ENCODE measurements at regions of chr12 and their contacts with region 1.

Region 1: DNA sequence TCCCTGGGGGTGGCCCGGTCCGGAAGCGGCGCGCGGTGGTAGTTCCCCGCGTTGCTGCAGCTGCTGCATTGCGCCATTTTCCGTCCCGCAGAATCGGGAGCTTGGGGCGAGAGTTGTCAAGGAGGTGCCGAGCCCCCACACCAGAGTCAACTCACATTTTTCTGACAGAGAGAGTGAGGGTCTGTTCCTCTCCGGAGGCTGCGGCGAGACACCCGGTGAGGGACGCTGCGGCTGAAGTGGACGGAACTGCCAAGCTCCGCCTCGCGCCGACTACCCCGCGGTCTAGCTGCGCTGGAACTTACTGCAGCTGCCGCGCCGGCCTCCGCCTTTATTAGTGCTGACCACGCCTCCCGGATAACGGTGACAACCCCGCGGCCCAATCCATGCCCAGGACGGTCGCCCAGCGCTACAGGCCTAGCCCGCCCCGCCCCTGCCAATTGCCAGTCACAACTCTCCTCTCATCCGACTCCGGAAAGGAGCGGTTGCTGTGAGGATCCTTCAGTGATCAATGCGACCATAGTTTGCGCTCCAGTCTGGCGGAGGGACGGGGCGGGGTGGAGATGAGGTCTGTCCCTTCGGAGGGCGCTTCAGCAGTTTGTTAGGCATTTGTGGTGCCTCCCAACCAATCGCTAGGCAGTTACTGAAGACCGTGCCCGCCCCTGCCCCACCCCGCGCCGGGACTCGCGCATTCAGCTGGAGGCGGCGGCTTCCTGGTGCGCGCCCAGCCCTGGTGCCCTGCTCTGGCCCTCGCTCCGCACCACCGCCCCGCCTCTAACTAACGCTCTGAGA is at the start of gene VAMP1:
- DNase-seq: peak; percentile 90 to 97 (median 95)
- ATAC-seq: peak; percentile 94
- H3K4me3 ChIP-seq: peak within 1 kb of the TSS; percentile 96
- H3K4me3 Mint-ChIP-seq: peak within 1 kb of the TSS; percentile 85 to 96 (median 92)
- H3K27ac ChIP-seq: peak within 1 kb of the TSS; percentile 75
- H3K27ac Mint-ChIP-seq: peak within 1 kb of the TSS; percentile 79 to 99 (median 95)
- H3K4me1 ChIP-seq: peaks cover 38 to 39% of the 10 kb centered on the region in 2 donors
- H3K4me1 Mint-ChIP-seq: peaks cover 26 to 59% (median 52%) of the 10 kb centered on the region in 7 donors
- H3K27me3 ChIP-seq: no peaks in the 10 kb centered on the region
- H3K27me3 Mint-ChIP-seq: peaks cover 0 to 5% (median 0%) of the 10 kb centered on the region in 5 donors
- total RNA-seq, gene VAMP1: 38.7 to 123 (median 47.9) TPM

Region 2: DNA sequence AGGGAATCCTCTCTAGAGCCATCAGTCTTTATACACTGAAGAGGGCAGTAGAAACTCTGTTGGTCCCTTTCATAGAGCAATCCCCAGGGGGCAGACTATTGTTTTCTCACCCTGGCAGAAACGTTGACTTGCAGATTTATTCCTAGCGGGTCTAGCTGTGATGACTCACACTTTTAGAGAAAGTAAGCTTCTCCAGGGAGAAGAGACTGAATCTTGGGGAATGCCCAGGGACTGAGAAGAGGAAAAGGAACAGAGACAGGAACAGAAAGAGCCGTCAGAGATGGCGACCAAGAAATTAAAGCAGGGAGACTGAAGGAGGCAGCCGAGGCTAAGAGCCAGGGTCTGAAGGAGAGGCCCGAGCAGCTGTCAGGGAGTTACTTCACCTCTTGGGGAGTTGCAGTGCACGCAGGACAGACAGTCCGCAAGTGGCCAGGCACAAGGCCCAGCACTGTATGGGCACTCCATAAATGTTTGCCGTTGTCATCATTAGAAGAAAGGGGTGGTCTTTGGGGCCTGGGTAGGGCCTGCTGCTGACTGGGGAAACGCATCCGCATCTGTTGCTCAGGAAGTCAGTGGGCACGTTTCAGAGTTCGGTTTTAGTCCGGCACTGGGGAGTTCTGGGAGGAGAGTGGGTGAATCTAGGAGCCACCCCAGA is 147.1 kb before region 1 on chr12:
- CTCF ChIA-PET with region 1: interaction called, 10 read pairs
- POLR2A ChIA-PET with region 1: interaction called, 4 read pairs
- intact Hi-C with region 1: loop called in 1 of 2 experiments (anchors 1 kb)
- DNase-seq: peak in 5 of 9 donors; percentile 49 to 59 (median 52)
- ATAC-seq: peak; percentile 90
- H3K4me3 ChIP-seq: peak overlapping the region; percentile 45
- H3K4me3 Mint-ChIP-seq: peak overlapping the region; percentile 63 to 90 (median 82)
- H3K27ac ChIP-seq: peak overlapping the region; percentile 35
- H3K27ac Mint-ChIP-seq: peak overlapping the region; percentile 68 to 95 (median 89)
- H3K4me1 ChIP-seq: peaks cover 27 to 38% of the 10 kb centered on the region in 2 donors
- H3K4me1 Mint-ChIP-seq: peaks cover 37 to 74% (median 53%) of the 10 kb centered on the region in 7 donors
- H3K27me3 ChIP-seq: no peaks in the 10 kb centered on the region
- H3K27me3 Mint-ChIP-seq: peaks cover 0 to 6% (median 0%) of the 10 kb centered on the region in 5 donors

Region 3: GRCh38 chr12:6443361-6443983 is 27.1 kb before region 1 on chr12:
- CTCF ChIA-PET with region 1: interaction called, 21 read pairs
- POLR2A ChIA-PET with region 1: interaction called, 726 read pairs
- intact Hi-C with region 1: no loop called
- DNase-seq: no peak
- ATAC-seq: no peak
- H3K4me3 ChIP-seq: peak overlapping the region; percentile 19
- H3K4me3 Mint-ChIP-seq: peak overlapping the region; percentile 95 to 100 (median 100)
- H3K27ac ChIP-seq: peak overlapping the region; percentile 87
- H3K27ac Mint-ChIP-seq: peak overlapping the region; percentile 92 to 100 (median 95)
- H3K4me1 ChIP-seq: peaks cover 25 to 32% of the 10 kb centered on the region in 2 donors
- H3K4me1 Mint-ChIP-seq: peaks cover 22 to 63% (median 53%) of the 10 kb centered on the region in 7 donors
- H3K27me3 ChIP-seq: no peaks in the 10 kb centered on the region
- H3K27me3 Mint-ChIP-seq: no peaks in the 10 kb centered on the region

Region 4: DNA sequence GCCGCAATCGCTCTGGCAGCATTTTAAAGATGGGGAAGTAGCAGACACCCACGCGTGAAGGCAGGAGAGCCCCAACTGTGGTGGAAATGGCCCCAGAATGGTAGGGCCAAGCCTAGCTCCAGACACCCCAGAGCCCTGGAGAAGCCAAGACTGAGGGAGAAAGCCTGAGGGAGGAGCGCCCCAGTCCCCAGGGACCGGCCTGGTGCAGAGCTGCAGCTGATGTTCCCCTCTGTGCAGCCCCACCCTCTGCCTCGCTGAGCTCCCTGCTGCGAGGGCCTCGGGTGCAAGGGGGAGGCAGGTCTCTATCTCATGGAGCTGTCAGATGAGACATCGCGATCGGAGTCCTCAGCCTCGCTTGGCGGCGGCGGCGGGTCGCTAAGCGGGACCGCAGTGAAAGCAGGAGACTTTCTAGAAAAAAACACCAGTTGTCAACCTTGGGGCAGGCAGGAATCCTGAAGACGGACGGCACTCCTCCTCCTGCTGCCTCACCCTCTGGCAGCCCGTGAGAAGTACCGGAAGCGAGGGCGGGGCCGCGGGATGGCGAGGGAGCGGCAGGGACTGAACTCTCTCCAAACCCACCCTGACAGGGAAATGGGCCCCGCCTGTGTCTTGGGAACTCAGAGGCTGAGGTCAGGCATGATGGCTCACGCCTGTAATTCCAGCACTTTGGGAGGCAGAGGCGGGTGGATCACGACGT is 69.8 kb after region 1 on chr12:
- CTCF ChIA-PET with region 1: interaction called, 12 read pairs
- POLR2A ChIA-PET with region 1: interaction called, 87 read pairs
- intact Hi-C with region 1: no loop called
- DNase-seq: peak in 6 of 9 donors; percentile 29 to 69 (median 36)
- ATAC-seq: peak; percentile 23
- H3K4me3 ChIP-seq: peak overlapping the region; percentile 27
- H3K4me3 Mint-ChIP-seq: peak overlapping the region; percentile 66 to 85 (median 80)
- H3K27ac ChIP-seq: peak overlapping the region; percentile 54
- H3K27ac Mint-ChIP-seq: peak overlapping the region; percentile 57 to 92 (median 83)
- H3K4me1 ChIP-seq: peaks cover 23 to 34% of the 10 kb centered on the region in 2 donors
- H3K4me1 Mint-ChIP-seq: peaks cover 32 to 61% (median 56%) of the 10 kb centered on the region in 7 donors
- H3K27me3 ChIP-seq: no peaks in the 10 kb centered on the region
- H3K27me3 Mint-ChIP-seq: no peaks in the 10 kb centered on the region

Region 5: GRCh38 chr12:6607751-6608591 is 137.4 kb after region 1 on chr12:
- CTCF ChIA-PET with region 1: no interaction called
- POLR2A ChIA-PET with region 1: interaction called, 4 read pairs
- intact Hi-C with region 1: loop called in 1 of 2 experiments (anchors 1 kb)
- DNase-seq: peak in 8 of 9 donors; percentile 56 to 81 (median 71)
- ATAC-seq: peak; percentile 49
- H3K4me3 ChIP-seq: no peak overlapping the region
- H3K4me3 Mint-ChIP-seq: no peak overlapping the region
- H3K27ac ChIP-seq: peak overlapping the region; percentile 96
- H3K27ac Mint-ChIP-seq: no peak overlapping the region
- H3K4me1 ChIP-seq: peaks cover 46 to 47% of the 10 kb centered on the region in 2 donors
- H3K4me1 Mint-ChIP-seq: peaks cover 48 to 55% (median 51%) of the 10 kb centered on the region in 7 donors
- H3K27me3 ChIP-seq: no peaks in the 10 kb centered on the region
- H3K27me3 Mint-ChIP-seq: no peaks in the 10 kb centered on the region

Measured in naive thymus-derived CD4-positive, alpha-beta T cell (primary cell).